ENCODE measurements at regions of chr2 and their contacts with region 1.

Region 1: DNA sequence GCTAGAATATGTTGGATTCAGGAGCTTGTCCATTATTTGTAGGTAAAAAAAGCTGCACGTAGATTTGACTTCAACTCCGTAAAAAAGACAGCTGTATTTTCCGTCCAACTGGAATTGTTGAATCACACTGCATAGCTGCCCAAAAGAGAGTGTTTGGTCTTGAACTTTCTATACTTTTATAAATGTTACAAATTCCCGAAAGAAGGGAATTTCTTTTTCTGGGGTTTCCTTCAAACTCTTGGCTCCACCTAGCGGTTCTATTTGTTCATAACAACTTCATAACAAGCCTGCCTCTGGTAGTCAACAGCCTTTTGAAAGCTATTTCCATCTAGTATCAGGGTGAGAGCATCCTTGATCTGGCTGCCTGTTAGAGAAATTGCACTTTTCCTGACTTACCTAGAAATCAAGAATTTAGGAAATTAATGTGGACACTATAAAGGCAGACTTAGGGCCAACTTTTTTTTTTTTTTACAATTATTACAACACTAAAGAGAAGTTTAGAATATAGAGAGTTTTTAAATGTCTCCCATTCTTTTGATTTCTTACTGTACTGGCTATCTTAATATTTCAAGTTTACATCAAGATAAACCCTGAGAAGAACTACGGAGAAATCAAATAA is 48.1 kb downstream of the TMEM185B start:
- DNase-seq: no peak
- ATAC-seq: peak; percentile 17 to 51

Region 2: DNA sequence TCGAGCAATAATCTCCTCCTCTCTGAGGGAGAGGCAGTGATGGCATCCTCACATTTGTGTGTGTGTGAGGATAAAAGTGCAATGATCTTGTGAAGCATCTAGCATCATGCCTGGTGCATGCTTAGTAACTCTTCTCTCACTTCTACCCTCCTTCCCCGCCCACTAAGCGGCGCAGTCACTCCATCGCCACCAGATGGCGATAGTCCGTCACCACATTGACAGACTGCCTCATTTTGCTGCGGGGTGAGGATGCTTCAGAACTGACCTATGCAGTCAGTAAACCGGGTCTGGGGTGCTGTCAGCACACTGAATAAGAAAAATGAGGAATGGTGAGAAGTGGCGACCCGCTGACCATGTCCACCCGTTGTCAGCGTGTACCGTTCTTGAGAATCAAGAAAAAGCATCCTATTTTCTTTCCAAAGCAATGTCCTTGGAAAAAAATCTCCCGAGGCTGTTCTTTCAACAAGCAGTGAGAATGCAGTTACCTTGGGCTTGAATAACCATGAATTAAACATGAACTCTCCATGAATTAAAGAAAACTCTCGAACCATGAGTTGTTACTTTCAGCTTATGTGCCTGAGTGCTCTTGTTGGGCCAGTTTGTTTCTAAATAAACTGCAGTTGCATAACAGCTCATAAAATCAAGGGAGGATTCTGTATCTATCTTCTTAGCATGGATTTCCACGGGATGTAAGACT is 533.4 kb before region 1 on chr2:
- intact Hi-C with region 1: loop called in 1 of 2 experiments (anchors 5 kb)
- DNase-seq: peak; percentile 71
- ATAC-seq: peak; percentile 83 to 94

Region 3: DNA sequence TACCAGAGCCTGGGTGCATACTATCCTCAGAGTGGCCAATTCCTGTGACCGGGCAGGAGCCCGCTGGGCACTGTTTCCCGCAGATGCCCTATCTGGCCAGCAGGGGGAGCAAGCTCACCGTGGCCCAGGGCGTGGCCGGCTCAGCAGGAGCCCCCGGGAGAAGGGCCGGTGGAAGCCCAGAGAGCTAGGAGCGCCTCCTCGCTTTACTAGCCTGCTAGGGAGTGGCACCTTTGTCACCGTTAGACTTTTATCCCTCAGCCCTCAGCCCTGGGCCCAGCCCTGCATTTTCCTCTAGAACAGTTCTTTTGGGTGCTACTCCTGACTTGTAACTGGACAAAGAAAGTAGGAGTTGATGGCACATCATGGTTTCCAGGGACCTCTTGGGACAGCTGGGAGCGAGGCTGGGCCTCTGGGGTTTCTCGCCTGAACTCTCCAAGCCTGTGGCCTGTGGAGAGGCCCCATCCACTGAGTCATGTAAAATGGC is 472.1 kb before region 1 on chr2:
- intact Hi-C with region 1: loop called in 1 of 2 experiments (anchors 5 kb)
- DNase-seq: peak; percentile 63
- ATAC-seq: peak; percentile 82 to 88

Region 4: DNA sequence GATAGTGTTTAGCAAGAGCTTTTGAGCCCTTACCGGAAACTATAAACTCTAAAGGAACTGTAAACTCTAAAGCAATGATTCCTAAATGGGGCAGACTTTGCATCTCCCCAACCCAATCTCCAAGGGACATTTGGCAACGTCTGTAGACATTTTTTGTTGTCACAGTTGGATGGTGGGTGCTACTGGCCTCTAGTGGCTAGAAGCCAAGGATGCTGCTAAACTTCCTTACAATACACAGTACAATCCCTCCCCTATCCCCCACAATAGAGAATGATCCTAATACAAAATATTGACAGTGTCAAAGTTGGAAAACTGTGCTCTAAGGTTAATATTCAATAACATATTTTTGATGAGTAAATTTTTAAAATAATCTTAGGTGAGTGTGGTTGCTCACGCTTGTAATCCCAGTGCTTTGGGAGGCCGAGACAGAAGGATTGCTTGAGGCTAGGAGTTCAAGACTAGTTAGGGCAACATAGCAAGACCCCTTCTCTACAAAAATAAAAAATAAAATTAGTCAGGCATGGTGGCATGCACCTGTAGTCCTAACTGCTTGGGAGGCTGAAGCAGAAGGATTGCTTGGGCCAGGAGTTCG is 348.6 kb before region 1 on chr2:
- intact Hi-C with region 1: loop called in 1 of 2 experiments (anchors 10 kb)
- DNase-seq: no peak
- ATAC-seq: peak in 1 of 2 donors; percentile 47

Region 5: DNA sequence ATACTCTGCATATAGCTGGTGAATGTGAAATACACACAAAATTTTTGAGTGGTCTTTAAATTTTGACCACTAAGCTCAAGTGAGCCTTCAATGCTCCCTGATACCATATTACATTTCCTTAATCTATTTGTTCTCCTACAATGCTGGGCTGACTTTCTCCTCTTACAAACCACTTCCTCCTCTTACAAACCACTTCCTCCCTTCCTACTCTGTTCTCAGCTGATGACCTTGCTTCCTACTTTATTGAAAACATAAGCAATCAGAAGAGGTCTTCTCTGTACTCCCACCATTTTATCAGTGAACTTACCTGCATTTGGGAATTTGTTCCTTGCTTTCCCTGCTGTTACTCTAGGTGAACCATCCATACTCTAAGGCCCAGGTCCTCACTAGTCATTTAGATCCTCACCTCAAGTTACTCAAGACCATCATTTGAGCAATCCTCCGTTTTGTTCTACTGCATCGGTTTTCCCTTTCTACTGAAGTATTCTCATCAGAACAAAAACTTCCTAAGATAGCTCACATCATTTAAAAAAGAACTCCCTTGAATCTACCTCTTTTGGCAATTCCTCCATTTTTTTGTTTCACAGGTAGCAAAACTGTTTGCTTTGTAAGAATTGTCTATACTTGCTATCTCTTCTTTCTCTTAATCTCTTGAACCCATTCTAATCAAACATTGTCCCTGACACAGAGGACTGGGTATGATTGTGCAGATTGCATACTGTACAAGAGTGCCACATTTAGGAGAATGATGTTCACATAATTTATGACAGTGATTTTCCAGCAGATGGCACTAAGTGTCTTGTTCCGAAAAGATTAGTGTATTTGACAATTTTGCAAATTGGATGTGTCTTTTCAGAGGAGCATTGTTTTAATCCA is 65.6 kb before region 1 on chr2:
- intact Hi-C with region 1: loop called in 1 of 2 experiments (anchors 10 kb)
- DNase-seq: no peak
- ATAC-seq: peak in 1 of 2 donors; percentile 48

Region 6: GRCh38 chr2:120134263-120134662 is 40.8 kb before region 1 on chr2:
- intact Hi-C with region 1: no loop called
- DNase-seq: no peak
- ATAC-seq: no peak

Region 7: GRCh38 chr2:120294008-120294340 is 118.9 kb after region 1 on chr2:
- intact Hi-C with region 1: no loop called
- DNase-seq: no peak
- ATAC-seq: peak; percentile 84 to 96